Tibial artery (tissue), 4 donors: ENCODE measurements at regions of chr15 and their contacts with region 1.

Region 1: DNA sequence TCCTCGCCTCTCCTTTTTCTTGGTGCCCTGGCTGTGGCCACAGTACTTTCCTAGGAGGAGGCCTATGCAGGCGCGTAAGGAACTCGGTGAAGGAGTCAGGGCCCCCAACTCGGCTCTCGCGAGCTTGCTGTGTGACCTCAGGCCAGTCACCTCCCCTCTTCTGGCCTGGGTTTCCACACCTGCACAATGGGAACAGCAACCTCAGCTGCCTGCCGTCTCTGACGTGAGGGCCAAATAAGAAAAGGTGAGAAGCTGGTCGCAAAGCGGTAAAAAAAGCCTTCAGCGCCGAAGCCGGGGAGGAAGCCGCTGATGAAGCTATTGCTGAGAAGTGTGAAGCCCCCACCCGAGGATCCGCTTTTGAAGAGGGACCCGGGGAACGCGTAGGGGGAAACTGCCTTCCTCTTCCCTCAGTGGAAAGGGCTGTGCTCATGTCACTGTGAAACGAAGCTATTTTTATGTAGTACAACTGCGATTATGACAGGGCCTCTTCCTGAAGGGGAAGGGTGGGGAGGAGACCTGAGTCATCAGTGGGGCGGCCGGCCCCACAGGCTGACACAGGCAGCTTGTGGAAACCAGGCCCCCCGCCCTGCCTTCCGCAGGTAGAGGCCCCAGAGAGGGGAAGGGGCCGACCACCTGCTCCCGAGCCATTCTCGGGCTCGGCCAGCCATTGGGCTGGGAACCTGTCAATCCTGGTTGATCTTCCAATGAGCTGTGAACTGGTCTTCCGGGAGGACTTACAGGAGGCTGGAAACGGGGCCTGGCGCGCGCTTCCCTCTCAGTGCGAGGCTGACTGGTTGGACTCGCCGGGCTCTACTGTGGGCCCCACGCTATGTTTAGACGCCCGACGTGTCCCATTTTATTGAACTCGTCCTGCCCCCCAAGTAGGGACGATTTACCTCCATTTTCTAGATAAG is 18.0 kb upstream of the ANKDD1A start:
- DNase-seq: peak; percentile 91 to 97
- H3K4me3 ChIP-seq: peak overlapping the region; percentile 37 to 45
- H3K27ac ChIP-seq: peak overlapping the region; percentile 78 to 79
- H3K4me1 ChIP-seq: peaks cover 0 to 52% (median 28%) of the 10 kb centered on the region in 4 donors
- H3K27me3 ChIP-seq: no peaks in the 10 kb centered on the region
- CTCF ChIP-seq: no peak

Region 2: DNA sequence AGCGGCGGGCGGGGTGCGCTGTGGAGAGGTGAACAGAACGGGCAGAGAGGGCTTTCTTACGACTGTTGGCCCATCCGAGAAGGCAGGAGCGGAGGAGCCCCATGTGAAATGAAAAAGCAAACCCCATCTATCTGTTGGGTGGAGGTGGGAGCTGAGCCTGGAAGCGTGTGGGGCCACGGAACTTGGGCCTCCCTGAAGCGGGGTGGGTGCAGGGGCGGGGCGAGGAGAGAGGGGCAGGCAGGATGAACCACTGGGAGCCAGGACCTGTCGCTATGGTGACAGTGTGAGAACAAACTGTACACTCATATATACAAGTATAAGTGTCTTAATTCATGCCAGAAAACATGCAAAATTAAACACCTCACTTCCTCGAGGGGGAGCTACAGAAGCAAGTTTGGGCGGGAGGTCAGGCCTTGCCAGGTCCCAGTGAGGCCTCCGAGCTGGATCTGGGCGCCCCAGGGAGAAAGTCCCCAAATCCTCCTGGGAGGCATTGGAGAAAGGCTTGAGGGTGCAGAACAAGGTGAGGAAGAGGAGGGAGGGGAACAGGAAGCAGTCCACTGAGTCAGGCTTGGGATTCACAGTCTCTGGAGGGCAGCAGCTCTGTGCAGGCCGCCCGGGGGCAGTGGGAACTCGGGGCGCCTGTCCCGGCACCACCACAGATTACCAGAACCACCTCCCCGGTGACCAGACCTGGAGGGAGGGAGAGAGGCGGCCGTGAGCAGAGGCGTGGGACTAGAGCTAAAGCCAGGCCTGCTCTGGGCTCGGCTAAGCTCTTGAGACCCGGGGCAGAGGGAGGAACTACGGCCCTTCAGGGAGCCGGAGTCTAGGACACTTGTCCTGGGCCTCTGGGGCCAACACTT is 153.2 kb before region 1 on chr15:
- intact Hi-C with region 1: loop called (anchors 5 kb)
- DNase-seq: peak; percentile 52 to 84
- H3K4me3 ChIP-seq: no peak overlapping the region
- H3K27ac ChIP-seq: peak overlapping the region; percentile 62 to 78
- H3K4me1 ChIP-seq: peaks cover 0 to 49% (median 1%) of the 10 kb centered on the region in 4 donors
- H3K27me3 ChIP-seq: no peaks in the 10 kb centered on the region
- CTCF ChIP-seq: no peak

Region 3: GRCh38 chr15:64841258-64842095 is 52.3 kb before region 1 on chr15 and contains the start of gene PLEKHO2:
- intact Hi-C with region 1: loop called (anchors 10 kb)
- DNase-seq: peak; percentile 97 to 98
- H3K4me3 ChIP-seq: peak within 1 kb of the TSS; percentile 86 to 91
- H3K27ac ChIP-seq: peak within 1 kb of the TSS; percentile 96 to 97
- H3K4me1 ChIP-seq: peaks cover 0 to 48% (median 37%) of the 10 kb centered on the region in 4 donors
- H3K27me3 ChIP-seq: no peaks in the 10 kb centered on the region
- CTCF ChIP-seq: peak in 1 of 2 experiments; percentile 35

Region 4: DNA sequence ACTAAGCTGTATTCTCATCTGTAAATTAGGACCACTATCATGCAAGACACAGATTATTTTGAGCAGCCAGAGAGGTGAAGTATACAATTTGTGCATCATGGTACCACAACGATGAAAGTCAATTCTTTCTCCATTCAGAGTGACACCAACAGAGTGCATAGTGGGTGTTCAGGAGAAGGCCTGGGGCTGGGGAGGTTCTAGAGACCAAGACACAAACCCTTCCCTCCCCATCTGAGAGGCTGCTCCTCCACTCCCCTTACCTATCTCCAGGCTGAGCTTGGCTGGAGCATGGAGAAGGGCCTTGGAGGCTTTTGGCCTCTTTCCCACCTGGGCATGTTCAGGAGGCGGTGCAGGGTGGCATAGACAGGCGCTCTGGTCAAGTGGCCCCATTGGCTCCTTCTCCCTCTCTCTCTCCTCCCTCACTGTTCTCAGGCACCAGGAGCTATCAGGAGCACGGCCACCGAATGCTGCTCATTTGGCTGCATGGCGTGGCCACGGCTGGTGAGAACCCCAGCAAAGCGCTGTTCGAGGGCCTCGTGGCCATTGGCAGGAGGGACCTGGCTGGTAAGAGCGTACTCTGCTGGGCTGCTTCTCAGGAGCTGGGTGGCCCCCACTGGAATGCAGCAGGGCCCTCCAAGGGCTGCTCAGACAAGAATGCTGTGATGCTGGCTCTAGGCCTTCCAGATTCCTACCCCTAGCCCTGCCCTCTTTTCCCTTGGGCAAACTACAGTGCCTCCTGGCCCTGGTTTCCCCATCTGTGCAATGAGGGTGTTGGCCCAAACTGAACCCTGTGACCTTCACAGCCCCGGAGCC is 55.9 kb after region 1 on chr15:
- intact Hi-C with region 1: no loop called
- DNase-seq: no peak
- H3K4me3 ChIP-seq: no peak overlapping the region
- H3K27ac ChIP-seq: no peak overlapping the region
- H3K4me1 ChIP-seq: no peaks in the 10 kb centered on the region
- H3K27me3 ChIP-seq: no peaks in the 10 kb centered on the region
- CTCF ChIP-seq: no peak

Region 5: GRCh38 chr15:65028921-65029735 is 135.4 kb after region 1 on chr15 and contains the start of gene MTFMT:
- intact Hi-C with region 1: no loop called
- DNase-seq: peak; percentile 93 to 94
- H3K4me3 ChIP-seq: peak within 1 kb of the TSS; percentile 87 to 93
- H3K27ac ChIP-seq: peak within 1 kb of the TSS; percentile 83 to 85
- H3K4me1 ChIP-seq: peaks cover 0 to 40% (median 11%) of the 10 kb centered on the region in 4 donors
- H3K27me3 ChIP-seq: no peaks in the 10 kb centered on the region
- CTCF ChIP-seq: no peak